MCF 10A (cell line): ENCODE measurements at regions of chr2 and their contacts with region 1.

Region 1: GRCh38 chr2:95121407-95122196 is at the start of gene MRPS5:
- DNase-seq: peak; percentile 76
- H3K4me3 Mint-ChIP-seq: peak within 1 kb of the TSS; percentile 95
- H3K27ac Mint-ChIP-seq: peak within 1 kb of the TSS; percentile 88
- H3K4me1 Mint-ChIP-seq: peaks cover 26% of the 10 kb centered on the region
- H3K27me3 Mint-ChIP-seq: no peaks in the 10 kb centered on the region
- CTCF ChIP-seq: no peak
- total RNA-seq, gene MRPS5: 61.0 and 74.2 TPM in 2 replicates

Region 2: DNA sequence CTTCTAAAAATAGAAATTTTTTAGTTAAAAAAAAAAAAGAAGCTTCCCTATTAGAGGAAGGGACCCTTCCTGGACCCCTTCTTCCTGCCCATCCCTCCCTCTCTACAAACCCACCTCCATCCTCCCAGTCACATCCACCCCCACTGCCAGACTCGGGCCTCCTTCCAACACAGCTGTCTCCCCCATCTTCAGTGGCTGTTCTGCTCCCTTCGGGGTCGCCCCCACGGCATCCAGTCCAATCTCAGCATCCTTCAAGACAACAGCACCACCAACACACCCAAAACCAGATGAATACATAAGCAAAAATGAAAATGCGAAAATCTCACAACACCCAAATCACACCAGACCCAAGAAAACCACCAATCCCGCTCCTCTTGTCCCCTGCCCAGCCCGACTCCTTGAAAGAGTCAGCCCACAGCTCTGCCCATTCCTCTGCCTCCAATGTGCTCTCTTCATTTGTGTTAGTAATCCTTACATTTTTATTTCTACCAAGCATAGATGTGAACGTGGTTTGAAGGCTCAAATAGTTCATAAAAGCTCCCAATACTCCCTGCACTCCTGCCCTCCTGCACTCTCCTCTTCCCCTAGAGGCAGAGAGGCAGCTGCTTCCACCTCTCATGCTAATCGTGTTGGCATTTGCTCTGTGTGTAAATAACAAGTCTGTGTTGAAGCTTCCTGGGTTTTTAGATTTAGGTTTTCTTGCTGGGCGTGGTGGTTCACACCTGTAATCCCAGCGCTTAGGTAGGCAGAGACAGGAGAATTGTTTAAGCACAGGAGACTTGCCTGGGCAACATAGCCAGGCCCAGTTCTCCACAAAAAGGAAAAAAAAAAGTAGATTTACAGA is 59.1 kb before region 1 on chr2:
- CTCF ChIA-PET with region 1: no interaction called
- POLR2A ChIA-PET with region 1: no interaction called
- intact Hi-C with region 1: no loop called
- DNase-seq: no peak
- H3K4me3 Mint-ChIP-seq: no peak overlapping the region
- H3K27ac Mint-ChIP-seq: no peak overlapping the region
- H3K4me1 Mint-ChIP-seq: no peaks in the 10 kb centered on the region
- H3K27me3 Mint-ChIP-seq: peaks cover 50% of the 10 kb centered on the region
- CTCF ChIP-seq: no peak

Region 3: DNA sequence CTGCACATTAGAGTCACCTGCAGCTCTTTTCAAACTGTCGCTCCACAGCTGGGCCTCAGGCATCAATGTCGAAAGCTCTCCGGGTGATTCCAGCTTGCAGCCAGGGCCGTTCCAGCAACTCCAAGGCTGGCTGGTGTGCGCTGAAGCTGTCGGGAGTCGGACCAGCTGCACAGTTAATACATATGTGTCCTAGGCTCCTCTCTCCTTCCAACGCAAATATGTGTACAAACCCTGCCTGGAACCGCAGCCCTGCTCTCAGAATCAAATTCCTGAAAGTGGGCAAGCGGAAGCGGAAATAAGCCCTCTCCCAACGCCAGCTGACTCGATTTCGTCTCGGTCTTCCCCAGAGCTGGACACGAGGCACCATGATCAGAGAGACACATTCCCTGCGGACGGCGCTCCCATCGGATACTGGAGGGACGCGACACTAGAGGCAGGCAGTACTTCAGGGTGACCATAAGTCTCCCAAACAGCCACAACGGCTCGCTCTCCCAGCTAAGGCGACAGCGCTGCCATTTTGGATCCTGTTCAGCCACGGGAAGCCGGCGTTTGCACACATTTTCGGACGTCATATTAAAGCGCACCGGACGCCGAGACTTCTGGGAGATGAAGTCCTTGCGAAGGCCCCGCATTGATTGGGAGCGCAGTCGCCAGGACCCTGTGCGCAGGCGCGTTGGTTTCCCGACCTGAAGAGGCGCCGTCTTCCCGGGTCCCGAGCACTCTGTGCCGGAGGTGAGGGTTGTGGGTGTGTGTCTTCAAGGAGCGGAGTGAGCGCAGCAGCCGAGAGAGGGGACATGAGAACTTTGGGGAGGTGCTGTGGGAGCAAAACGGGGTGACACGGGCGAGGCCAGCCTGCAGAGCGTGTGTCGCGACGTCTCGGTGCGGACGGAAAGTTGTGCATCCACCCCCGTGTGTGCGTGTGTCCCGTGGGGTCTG is 43.8 kb after region 1 on chr2 and contains the start of gene ZNF2:
- CTCF ChIA-PET with region 1: interaction called, 20 read pairs
- POLR2A ChIA-PET with region 1: interaction called, 42 read pairs
- intact Hi-C with region 1: loop called (anchors 2 kb)
- DNase-seq: peak; percentile 99
- H3K4me3 Mint-ChIP-seq: peak within 1 kb of the TSS; percentile 100
- H3K27ac Mint-ChIP-seq: peak within 1 kb of the TSS; percentile 98
- H3K4me1 Mint-ChIP-seq: peaks cover 21% of the 10 kb centered on the region
- H3K27me3 Mint-ChIP-seq: no peaks in the 10 kb centered on the region
- CTCF ChIP-seq: no peak
- total RNA-seq, gene ZNF2: 4.1 and 4.4 TPM in 2 replicates

Region 4: GRCh38 chr2:95207111-95207961 is 85.7 kb after region 1 on chr2 and contains the start of gene ZNF892:
- CTCF ChIA-PET with region 1: interaction called, 4 read pairs
- POLR2A ChIA-PET with region 1: interaction called, 3 read pairs
- intact Hi-C with region 1: loop called (anchors 5 kb)
- DNase-seq: peak; percentile 94
- H3K4me3 Mint-ChIP-seq: peak within 1 kb of the TSS; percentile 90
- H3K27ac Mint-ChIP-seq: peak within 1 kb of the TSS; percentile 95
- H3K4me1 Mint-ChIP-seq: peaks cover 16% of the 10 kb centered on the region
- H3K27me3 Mint-ChIP-seq: no peaks in the 10 kb centered on the region
- CTCF ChIP-seq: peak; percentile 61
- total RNA-seq, gene ZNF892: 10.2 and 10.3 TPM in 2 replicates

Region 5: DNA sequence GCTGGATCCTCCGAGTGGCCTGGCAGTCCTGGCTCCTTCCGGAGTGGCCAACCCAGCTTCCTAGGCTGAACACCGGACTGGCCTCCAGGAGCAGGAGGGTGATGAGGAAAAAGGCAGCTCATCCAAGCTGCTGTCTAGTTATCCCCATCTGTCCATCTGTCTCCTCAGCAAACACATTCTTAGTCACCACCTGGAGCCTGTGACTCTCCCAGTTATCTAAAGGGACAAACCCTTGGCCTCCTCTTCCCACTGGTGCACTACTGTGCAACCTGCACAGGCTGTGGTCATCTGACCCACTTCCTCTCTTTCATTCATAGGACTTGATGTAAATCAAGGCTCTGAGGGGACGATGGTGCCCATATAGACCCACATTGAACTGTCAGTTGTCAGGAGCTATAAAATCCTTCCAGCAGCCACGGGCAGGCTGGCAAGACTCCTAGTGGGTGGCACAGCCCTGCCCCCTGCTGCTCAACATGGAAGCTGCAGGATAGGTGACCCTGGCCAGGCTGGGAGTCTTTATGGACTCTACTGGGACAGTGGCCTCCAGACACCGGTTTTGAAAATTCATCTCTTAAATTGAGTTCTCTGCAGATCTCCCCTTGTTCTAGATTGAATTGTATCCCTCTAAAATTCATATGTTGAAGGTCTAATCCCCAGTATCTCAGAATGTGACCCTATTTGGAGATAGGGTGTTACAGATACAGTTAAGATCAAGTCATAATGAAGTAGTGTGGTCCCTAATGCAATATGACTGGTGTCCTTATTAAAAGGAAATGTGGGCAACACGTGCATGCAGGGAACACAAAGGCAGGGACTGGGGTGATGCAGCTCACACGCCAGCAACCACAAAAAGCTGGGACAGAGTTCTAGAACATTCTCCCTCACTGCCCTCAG is 1052.9 kb after region 1 on chr2:
- CTCF ChIA-PET with region 1: no interaction called
- POLR2A ChIA-PET with region 1: no interaction called
- intact Hi-C with region 1: no loop called
- DNase-seq: peak; percentile 81
- H3K4me3 Mint-ChIP-seq: no peak overlapping the region
- H3K27ac Mint-ChIP-seq: no peak overlapping the region
- H3K4me1 Mint-ChIP-seq: no peaks in the 10 kb centered on the region
- H3K27me3 Mint-ChIP-seq: no peaks in the 10 kb centered on the region
- CTCF ChIP-seq: peak; percentile 88